CD4-positive, alpha-beta memory T cell (primary cell): ENCODE measurements at regions of chr1 and their contacts with region 1.

Region 1: DNA sequence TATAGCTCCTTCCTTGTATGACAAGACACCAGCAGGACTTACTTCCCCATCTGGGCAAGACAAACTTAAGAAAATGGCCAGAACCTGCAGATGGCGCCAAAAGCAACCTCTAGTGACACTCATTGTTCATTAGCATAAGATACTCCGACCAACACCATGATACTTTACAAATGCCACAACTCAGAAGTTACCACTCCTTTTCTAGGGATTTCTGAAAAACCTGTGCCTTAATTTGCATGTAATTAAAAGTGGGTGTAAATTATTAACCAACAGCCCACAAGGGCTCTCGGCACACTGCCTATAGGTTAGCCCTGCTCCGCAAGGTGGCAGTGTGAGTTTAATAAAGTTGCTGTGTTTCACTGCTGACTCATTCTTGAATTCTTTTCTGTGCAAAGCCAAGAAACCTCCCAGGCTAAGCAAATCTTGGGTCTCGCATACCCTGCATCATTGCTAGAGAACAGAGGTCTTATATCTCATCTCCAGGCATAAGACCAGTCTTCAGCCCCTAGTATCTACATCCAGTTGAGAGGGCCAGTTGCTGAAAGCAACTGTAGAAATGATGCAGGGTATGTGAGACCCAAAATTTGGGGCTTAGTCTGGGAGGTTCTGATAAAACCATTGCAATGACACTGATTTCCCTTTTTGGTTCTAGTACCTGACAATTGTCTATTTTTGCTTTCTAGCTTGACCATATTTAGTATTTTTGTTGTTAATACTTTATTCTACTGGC is 86.4 kb downstream of the FAF1 start:
- DNase-seq: peak; percentile 51 to 72 (median 67)
- H3K4me3 ChIP-seq: peak overlapping the region in 1 of 2 donors; percentile 11
- H3K4me3 Mint-ChIP-seq: peak overlapping the region; percentile 56 to 86 (median 65)
- H3K27ac ChIP-seq: no peak overlapping the region
- H3K27ac Mint-ChIP-seq: peak overlapping the region in 2 of 7 donors; percentile 10 to 44
- H3K4me1 ChIP-seq: no peaks in the 10 kb centered on the region
- H3K4me1 Mint-ChIP-seq: peaks cover 4 to 19% (median 11%) of the 10 kb centered on the region in 4 donors
- H3K27me3 ChIP-seq: no peaks in the 10 kb centered on the region
- H3K27me3 Mint-ChIP-seq: no peaks in the 10 kb centered on the region

Region 2: DNA sequence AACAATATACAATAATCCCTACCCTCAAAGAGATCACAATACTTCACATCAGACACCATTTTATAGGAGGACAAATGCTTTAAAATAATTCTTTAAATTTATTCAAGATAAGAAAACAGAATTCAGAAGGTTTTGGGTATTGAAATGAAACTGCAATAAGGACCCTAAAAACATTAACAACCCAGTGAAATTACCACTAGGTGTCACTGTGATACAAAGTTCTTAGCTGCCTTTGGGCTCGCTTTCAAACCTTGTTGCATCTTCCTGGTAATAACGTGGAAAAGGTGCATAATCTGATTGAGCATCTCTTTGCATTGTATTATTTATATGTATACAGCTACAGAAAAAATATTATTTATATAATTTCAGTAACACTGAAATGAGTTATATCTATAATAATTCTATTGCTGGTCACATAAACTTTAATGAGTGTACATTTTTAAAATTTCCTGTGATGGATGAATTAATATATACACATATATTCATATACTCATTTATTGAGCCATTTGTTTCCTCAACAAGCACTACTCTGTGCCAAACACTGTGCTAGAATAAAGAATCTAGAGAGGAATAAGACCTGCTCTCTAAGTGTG is 98.8 kb before region 1 on chr1:
- CTCF ChIA-PET with region 1: interaction called, 20 read pairs
- POLR2A ChIA-PET with region 1: no interaction called
- intact Hi-C with region 1: no loop called
- DNase-seq: peak in 4 of 5 donors; percentile 26 to 32 (median 31)
- H3K4me3 ChIP-seq: no peak overlapping the region
- H3K4me3 Mint-ChIP-seq: no peak overlapping the region
- H3K27ac ChIP-seq: no peak overlapping the region
- H3K27ac Mint-ChIP-seq: peak overlapping the region in 1 of 7 donors; percentile 1
- H3K4me1 ChIP-seq: no peaks in the 10 kb centered on the region
- H3K4me1 Mint-ChIP-seq: peaks cover 7 to 13% (median 8%) of the 10 kb centered on the region in 4 donors
- H3K27me3 ChIP-seq: no peaks in the 10 kb centered on the region
- H3K27me3 Mint-ChIP-seq: no peaks in the 10 kb centered on the region

Region 3: GRCh38 chr1:50929376-50929958 is 55.8 kb after region 1 on chr1:
- CTCF ChIA-PET with region 1: interaction called, 4 read pairs
- POLR2A ChIA-PET with region 1: no interaction called
- intact Hi-C with region 1: loop called (anchors 1 kb)
- DNase-seq: peak in 4 of 5 donors; percentile 22 to 36 (median 28)
- H3K4me3 ChIP-seq: no peak overlapping the region
- H3K4me3 Mint-ChIP-seq: no peak overlapping the region
- H3K27ac ChIP-seq: no peak overlapping the region
- H3K27ac Mint-ChIP-seq: no peak overlapping the region
- H3K4me1 ChIP-seq: no peaks in the 10 kb centered on the region
- H3K4me1 Mint-ChIP-seq: peaks cover 19 to 31% (median 26%) of the 10 kb centered on the region in 4 donors
- H3K27me3 ChIP-seq: no peaks in the 10 kb centered on the region
- H3K27me3 Mint-ChIP-seq: no peaks in the 10 kb centered on the region

Region 4: GRCh38 chr1:51044834-51045233 is 171.2 kb after region 1 on chr1:
- CTCF ChIA-PET with region 1: interaction called, 8 read pairs
- POLR2A ChIA-PET with region 1: no interaction called
- intact Hi-C with region 1: loop called (anchors 1 kb)
- DNase-seq: peak in 1 of 5 donors; percentile 9
- H3K4me3 ChIP-seq: no peak overlapping the region
- H3K4me3 Mint-ChIP-seq: no peak overlapping the region
- H3K27ac ChIP-seq: no peak overlapping the region
- H3K27ac Mint-ChIP-seq: no peak overlapping the region
- H3K4me1 ChIP-seq: no peaks in the 10 kb centered on the region
- H3K4me1 Mint-ChIP-seq: peaks cover 0 to 2% (median under 1%) of the 10 kb centered on the region in 4 donors
- H3K27me3 ChIP-seq: no peaks in the 10 kb centered on the region
- H3K27me3 Mint-ChIP-seq: peaks cover 13 to 18% of the 10 kb centered on the region in 2 donors

Region 5: DNA sequence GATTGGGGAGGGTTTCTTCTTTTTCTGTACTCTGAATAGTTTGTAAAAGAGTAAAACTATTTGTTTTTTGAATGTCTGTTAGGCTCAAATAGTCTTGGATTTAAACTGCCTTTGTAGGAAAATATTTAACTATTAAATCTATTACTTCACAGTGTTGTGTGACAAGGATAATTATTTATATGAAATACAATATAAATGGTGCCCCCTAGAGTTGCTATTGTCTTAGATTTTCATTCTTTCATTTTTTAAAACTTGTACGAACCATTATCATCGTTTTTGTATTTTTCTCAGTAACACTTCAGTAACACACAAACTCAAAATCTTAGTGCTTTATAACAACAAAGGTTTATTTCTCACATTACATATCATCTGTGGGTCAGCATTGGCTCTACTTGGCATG is 265.9 kb after region 1 on chr1:
- CTCF ChIA-PET with region 1: interaction called, 4 read pairs
- POLR2A ChIA-PET with region 1: no interaction called
- intact Hi-C with region 1: loop called (anchors 1 kb)
- DNase-seq: no peak
- H3K4me3 ChIP-seq: no peak overlapping the region
- H3K4me3 Mint-ChIP-seq: peak overlapping the region in 1 of 8 donors; percentile 46
- H3K27ac ChIP-seq: no peak overlapping the region
- H3K27ac Mint-ChIP-seq: peak overlapping the region in 1 of 7 donors; percentile 20
- H3K4me1 ChIP-seq: no peaks in the 10 kb centered on the region
- H3K4me1 Mint-ChIP-seq: peaks cover 0 to 3% (median 0%) of the 10 kb centered on the region in 4 donors
- H3K27me3 ChIP-seq: no peaks in the 10 kb centered on the region
- H3K27me3 Mint-ChIP-seq: peaks cover 2 to 8% of the 10 kb centered on the region in 2 donors

Region 6: GRCh38 chr1:51296383-51297357 is 423.0 kb after region 1 on chr1:
- CTCF ChIA-PET with region 1: no interaction called
- POLR2A ChIA-PET with region 1: no interaction called
- intact Hi-C with region 1: loop called (anchors 2 kb)
- DNase-seq: peak; percentile 45 to 60 (median 53)
- H3K4me3 ChIP-seq: peak overlapping the region; percentile 36 to 52
- H3K4me3 Mint-ChIP-seq: peak overlapping the region; percentile 58 to 84 (median 76)
- H3K27ac ChIP-seq: no peak overlapping the region
- H3K27ac Mint-ChIP-seq: peak overlapping the region in 2 of 7 donors; percentile 13 to 52
- H3K4me1 ChIP-seq: peaks cover 12% of the 10 kb centered on the region
- H3K4me1 Mint-ChIP-seq: peaks cover 4 to 30% (median 12%) of the 10 kb centered on the region in 4 donors
- H3K27me3 ChIP-seq: no peaks in the 10 kb centered on the region
- H3K27me3 Mint-ChIP-seq: no peaks in the 10 kb centered on the region